ENCODE measurements at regions of chr19 and their contacts with region 1.

Region 1: DNA sequence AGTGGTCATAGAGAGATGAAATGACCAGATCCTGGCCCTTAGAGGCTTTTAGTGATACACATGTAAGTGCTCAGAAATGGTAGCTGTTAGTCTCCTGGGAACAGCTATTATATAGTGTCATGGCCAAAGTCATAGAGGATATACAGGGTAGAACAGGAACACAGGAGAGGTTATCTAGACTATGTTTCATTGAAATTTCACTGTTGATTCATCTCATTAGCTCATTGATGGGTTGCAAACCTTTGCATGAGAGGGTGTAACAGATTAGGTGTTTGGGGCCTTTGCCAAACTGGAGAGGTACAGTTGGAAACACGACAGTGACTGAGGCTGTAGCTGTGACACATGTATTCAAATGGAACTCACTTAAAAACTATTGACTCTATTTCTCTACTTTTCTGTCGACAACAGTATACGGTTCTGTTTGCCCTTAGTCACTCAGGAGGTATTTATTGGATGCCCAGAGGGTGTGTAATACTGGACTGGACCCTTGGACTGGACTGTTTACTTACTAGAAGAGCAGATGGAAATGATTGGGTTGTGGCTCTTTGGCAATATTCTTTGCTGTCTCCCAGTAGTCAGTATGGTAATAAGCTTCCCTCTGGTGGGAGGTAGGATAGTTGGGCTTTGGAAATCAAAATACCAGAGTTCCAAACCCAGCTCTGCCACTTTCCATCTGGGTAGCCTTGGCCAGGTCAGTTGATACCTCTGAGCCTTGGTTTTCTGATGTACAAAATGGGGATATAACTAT is 29.8 kb downstream of the ARHGAP35 start:
- DNase-seq: peak; percentile 92
- ATAC-seq: peak; percentile 93
- H3K4me3 ChIP-seq: no peak overlapping the region; the same call in 1 of the 2 replicates
- H3K27ac ChIP-seq: peak overlapping the region; percentile 79
- H3K4me1 ChIP-seq: peaks cover 40% of the 10 kb centered on the region
- H3K27me3 ChIP-seq: no peaks in the 10 kb centered on the region
- CTCF ChIP-seq: no peak

Region 2: DNA sequence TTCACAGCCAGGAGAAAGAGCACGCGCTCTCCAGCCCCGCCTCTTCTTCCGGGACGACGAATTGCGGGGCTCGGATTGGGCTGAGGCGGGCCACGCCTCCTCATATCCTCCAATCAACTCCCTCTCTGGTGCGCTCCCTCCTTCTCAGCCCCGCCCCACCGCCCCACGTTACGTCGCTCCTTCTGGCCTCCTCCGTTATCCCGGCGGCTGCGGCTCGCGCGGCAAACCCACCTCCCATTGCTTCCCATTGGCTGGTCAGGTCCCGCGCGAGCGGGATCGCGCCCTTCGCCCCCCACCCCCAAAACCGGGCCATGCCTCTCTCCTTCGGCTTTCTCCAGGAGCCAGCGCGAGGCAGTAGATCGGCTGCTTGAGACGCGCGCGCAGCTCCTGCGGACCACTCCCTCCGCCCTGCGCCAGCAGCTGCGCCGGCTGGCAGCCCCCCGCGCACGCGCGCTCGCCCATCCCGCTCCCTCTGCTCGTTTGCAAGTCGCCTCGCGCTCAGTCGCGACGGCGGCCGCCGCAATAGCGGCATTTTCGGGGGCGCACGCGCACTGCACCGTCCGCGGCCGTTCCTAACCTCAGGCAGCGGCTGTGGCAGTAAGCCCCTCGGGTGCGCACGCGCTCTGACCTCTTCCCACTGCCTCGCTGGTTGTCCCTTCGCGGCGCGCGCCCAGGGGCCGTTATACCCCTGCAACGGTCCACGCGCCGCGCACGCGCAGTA is 30.3 kb before region 1 on chr19:
- CTCF ChIA-PET with region 1: no interaction called
- POLR2A ChIA-PET with region 1: no interaction called
- intact Hi-C with region 1: loop called (anchors 5 kb)
- DNase-seq: peak; percentile 94
- ATAC-seq: peak; percentile 69
- H3K4me3 ChIP-seq: peak overlapping the region; percentile 77
- H3K27ac ChIP-seq: peak overlapping the region; percentile 90
- H3K4me1 ChIP-seq: peaks cover 41% of the 10 kb centered on the region
- H3K27me3 ChIP-seq: no peaks in the 10 kb centered on the region
- CTCF ChIP-seq: no peak

Region 3: GRCh38 chr19:46866387-46867152 is 24.0 kb before region 1 on chr19:
- CTCF ChIA-PET with region 1: interaction called, 3 read pairs
- POLR2A ChIA-PET with region 1: no interaction called
- intact Hi-C with region 1: loop called (anchors 2 kb)
- DNase-seq: peak; percentile 84
- ATAC-seq: peak; percentile 66
- H3K4me3 ChIP-seq: peak overlapping the region; percentile 43
- H3K27ac ChIP-seq: peak overlapping the region; percentile 75
- H3K4me1 ChIP-seq: peaks cover 61% of the 10 kb centered on the region
- H3K27me3 ChIP-seq: no peaks in the 10 kb centered on the region
- CTCF ChIP-seq: no peak

Region 4: DNA sequence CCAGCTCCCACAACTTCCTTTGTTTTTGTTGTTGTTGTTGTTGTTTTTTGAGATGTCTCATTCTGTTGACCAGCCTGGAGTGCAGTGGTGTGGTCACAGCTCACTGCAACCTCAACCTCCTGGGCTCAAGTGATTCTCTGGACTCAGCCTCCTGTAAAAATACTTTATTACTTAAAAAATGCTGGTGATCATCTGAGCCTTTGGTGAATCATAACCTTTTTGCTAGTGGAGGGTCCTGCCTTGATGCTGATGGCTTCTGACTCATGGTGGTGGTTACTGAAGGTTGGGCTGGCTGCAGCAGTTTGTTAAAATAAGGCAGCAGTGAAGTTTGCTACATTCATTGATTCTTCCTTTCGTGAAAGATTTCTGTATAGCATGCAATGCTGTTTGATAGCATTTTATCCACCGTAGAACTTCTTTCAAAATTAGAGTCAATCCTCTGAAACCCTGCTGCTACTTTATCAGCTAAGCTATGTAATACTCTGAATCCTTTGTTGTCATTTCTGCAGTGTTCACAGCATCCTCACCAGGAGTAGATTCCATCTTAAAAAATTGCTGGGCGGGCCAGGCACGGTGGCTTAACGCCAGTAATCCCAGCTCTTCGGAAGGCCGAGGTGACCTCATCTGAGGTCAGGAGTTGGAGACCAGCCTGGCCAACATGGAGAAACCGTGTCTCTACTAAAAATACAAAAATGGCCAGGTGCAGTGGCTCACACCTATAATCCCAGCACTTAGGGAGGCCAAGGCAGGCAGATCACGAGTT is 11.8 kb before region 1 on chr19:
- CTCF ChIA-PET with region 1: no interaction called
- POLR2A ChIA-PET with region 1: no interaction called
- intact Hi-C with region 1: loop called (anchors 1 kb)
- DNase-seq: peak; percentile 80
- ATAC-seq: peak; percentile 91
- H3K4me3 ChIP-seq: peak overlapping the region; percentile 23; the same call in 1 of the 2 replicates
- H3K27ac ChIP-seq: peak overlapping the region; percentile 90
- H3K4me1 ChIP-seq: peaks cover 26% of the 10 kb centered on the region
- H3K27me3 ChIP-seq: no peaks in the 10 kb centered on the region
- CTCF ChIP-seq: no peak

Region 5: DNA sequence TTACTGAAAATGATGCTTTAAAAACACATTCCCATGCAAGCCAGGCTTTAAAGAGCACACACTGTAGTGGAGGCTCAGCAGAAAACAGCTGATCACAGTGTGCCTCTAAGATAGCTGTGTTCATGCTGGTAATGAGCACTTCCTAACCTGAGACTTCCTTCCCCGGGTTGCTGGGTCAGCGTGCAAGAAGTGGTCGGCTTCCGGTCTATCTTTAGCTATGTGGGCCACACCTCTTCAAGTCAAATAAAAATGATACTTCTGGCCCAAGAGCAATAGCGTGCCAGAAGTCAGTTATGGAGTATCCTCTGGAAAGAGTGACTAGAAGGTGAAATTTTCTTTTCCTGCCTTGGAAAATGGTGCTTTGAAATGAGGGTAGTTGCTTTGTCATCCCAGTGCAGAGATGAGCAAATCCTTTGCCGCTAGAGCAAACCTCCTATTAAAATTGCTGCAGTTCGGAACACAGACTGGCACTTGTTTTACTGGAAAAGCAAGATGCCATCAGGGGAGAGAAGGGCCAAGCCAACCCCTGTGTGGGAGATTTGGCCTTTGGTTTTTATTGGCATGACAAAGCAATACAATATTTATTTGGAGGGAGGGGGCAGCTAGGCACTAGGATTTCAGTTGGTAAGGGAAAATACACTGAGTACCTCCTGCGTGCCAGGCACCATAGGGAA is 34.4 kb after region 1 on chr19:
- CTCF ChIA-PET with region 1: no interaction called
- POLR2A ChIA-PET with region 1: no interaction called
- intact Hi-C with region 1: loop called (anchors 2 kb)
- DNase-seq: peak; percentile 94
- ATAC-seq: peak; percentile 77
- H3K4me3 ChIP-seq: peak overlapping the region; percentile 62
- H3K27ac ChIP-seq: peak overlapping the region; percentile 99
- H3K4me1 ChIP-seq: peaks cover 50% of the 10 kb centered on the region
- H3K27me3 ChIP-seq: no peaks in the 10 kb centered on the region
- CTCF ChIP-seq: no peak

Region 6: DNA sequence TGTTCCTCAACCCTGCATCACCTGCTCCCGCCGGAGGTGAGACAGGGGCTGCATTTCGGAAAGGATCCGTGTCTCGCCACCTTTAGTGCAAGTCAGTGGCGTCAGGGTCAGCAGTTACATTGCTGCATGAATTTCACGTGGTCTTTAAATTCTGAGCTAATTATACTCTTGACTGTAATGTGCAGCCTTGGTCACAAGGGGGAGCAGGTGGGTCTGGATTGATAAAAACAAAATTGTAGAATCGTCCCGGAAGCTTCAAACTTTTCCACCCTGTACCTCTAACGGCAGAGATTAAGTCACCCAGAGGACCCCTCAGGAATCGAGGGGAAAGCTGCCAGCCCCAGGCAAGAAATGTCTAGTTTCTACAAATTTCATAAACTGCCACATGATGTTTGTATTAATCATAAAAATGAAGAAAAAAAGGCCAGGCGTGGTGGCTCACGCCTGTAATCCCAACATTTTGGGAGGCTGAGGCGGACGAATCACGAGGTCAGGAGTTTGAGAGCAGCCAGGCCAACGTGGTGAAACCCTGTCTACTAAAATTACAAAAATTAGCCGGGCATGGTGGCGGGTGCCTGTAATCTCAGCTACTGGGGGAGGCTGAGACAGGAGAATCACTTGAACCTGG is 320.2 kb after region 1 on chr19:
- CTCF ChIA-PET with region 1: no interaction called
- POLR2A ChIA-PET with region 1: interaction called, 21 read pairs
- intact Hi-C with region 1: no loop called
- DNase-seq: peak; percentile 81
- ATAC-seq: peak; percentile 35
- H3K4me3 ChIP-seq: no peak overlapping the region
- H3K27ac ChIP-seq: no peak overlapping the region
- H3K4me1 ChIP-seq: no peaks in the 10 kb centered on the region
- H3K27me3 ChIP-seq: no peaks in the 10 kb centered on the region
- CTCF ChIP-seq: peak; percentile 74